AG04450 (cell line): ENCODE measurements at regions of chr9 and their contacts with region 1.

Region 1: GRCh38 chr9:116687074-116687753 is at the start of gene TRIM32:
- DNase-seq: peak; percentile 67
- H3K4me3 ChIP-seq: peak within 1 kb of the TSS; percentile 81
- H3K27ac ChIP-seq: peak within 1 kb of the TSS; percentile 31
- H3K27me3 ChIP-seq: no peaks in the 10 kb centered on the region
- CTCF ChIP-seq: no peak
- polyA plus RNA-seq, gene TRIM32: 23.4 and 24.5 TPM in 2 replicates

Region 2: DNA sequence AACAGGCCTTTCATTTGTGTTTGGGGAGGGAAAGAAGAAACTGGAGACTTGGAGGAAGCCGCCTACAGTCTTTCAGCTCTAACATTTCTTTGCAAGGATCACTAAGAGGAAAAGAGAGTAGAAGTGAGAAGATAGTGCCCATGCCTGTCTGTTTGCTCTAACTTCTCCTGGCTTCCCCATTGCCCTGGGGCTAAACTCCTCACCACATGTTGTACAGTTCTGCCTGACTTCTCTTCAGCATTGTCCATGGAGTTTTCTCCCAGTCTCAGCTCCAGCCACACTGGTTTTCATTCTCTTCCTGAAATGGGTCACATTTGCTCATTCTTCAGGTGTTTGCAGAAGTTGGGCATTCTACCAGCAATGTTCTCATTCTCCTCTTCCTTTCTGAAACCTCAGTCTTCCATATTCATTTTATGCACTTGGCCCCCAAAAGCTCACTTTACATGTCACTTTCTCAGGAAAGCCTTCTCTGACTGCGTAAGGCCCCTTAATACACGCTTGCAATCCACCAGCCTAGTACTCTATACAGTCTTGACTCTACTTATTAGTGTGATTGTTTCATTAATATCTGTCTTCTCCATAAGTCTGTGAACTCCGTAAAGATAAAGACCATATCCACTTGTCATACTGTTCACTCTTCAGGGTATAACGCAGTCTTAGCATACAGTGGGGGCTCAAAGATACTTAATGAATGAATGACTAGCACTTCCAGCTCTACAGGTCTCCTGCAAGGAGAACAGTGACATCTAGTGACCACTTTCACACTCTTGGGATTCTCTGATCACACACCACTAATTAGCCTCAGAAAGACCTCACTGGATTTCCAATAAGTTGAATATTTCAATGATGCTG is 40.3 kb before region 1 on chr9:
- CTCF ChIA-PET with region 1: no interaction called
- POLR2A ChIA-PET with region 1: no interaction called
- DNase-seq: no peak
- H3K4me3 ChIP-seq: no peak overlapping the region
- H3K27ac ChIP-seq: no peak overlapping the region
- H3K27me3 ChIP-seq: no peaks in the 10 kb centered on the region
- CTCF ChIP-seq: peak; percentile 70

Region 3: DNA sequence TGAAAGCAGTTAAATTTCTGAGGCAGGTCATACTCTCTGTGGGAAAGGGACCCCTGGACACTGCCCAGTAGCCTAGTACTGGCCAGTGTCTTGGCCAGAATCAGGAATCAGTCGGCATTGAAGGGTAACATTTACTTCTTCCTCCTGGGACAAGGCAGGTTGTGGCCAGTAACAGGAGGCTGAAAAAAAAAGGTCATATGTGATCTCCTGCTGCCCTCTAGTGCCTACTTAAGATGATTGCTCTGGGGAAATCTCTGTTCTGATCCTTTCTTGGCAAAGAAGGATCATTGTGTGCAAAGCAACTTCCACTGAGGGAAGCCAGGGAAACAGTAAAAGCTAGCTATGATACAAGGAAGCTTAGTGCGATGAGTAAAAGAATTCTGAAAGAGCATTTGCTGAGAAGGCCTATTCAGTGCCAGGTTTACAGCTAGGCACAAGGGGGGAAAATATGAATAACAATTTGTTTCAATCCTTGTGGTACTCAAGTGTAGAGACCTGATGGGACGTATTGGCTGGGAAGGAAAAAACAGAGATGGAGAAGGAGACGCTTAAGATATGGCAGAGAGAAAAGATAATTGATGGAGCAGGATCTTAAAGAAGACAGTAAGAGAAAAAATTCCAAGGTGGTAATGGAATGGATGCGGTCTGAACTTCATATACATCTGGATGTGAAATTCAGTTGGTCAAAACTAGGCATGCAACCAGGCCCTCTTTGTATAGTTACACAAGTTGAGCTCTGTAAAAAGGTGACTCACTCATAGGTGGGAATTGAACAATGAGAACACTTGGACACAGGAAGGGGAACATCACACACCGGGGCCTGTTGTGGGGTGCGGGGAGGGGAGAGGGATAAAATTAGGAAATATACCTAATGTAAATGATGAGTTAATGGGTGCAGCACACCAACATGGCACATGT is 25.9 kb before region 1 on chr9:
- CTCF ChIA-PET with region 1: no interaction called
- POLR2A ChIA-PET with region 1: no interaction called
- DNase-seq: peak; percentile 74
- H3K4me3 ChIP-seq: no peak overlapping the region
- H3K27ac ChIP-seq: no peak overlapping the region
- H3K27me3 ChIP-seq: no peaks in the 10 kb centered on the region
- CTCF ChIP-seq: peak; percentile 82

Region 4: DNA sequence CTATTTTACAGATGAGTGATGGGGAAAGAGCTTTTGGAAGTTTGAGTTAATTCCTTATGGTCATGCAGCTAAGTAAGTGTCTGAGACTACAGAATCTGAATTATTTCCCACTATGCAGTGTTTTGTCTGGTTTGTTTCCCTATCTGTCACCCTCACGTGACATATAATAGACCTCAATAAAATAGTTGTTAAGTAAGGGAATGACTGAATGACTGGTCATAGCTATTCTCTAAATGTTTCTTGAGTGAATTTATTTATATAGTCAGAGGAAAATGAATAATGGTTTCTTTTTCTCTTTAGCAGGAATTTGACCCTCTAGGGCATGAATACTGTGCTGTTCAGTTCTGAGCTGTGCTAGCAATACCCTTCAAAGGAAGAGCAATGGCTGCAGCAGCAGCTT is 10.1 kb after region 1 on chr9:
- CTCF ChIA-PET with region 1: interaction called, 3 read pairs
- POLR2A ChIA-PET with region 1: interaction called, 13 read pairs
- DNase-seq: no peak
- H3K4me3 ChIP-seq: no peak overlapping the region
- H3K27ac ChIP-seq: no peak overlapping the region
- H3K27me3 ChIP-seq: no peaks in the 10 kb centered on the region
- CTCF ChIP-seq: no peak

Region 5: GRCh38 chr9:116717150-116717549 is 29.9 kb after region 1 on chr9:
- CTCF ChIA-PET with region 1: no interaction called
- POLR2A ChIA-PET with region 1: no interaction called
- DNase-seq: no peak
- H3K4me3 ChIP-seq: no peak overlapping the region
- H3K27ac ChIP-seq: no peak overlapping the region
- H3K27me3 ChIP-seq: peaks cover 2% of the 10 kb centered on the region
- CTCF ChIP-seq: no peak

Region 6: DNA sequence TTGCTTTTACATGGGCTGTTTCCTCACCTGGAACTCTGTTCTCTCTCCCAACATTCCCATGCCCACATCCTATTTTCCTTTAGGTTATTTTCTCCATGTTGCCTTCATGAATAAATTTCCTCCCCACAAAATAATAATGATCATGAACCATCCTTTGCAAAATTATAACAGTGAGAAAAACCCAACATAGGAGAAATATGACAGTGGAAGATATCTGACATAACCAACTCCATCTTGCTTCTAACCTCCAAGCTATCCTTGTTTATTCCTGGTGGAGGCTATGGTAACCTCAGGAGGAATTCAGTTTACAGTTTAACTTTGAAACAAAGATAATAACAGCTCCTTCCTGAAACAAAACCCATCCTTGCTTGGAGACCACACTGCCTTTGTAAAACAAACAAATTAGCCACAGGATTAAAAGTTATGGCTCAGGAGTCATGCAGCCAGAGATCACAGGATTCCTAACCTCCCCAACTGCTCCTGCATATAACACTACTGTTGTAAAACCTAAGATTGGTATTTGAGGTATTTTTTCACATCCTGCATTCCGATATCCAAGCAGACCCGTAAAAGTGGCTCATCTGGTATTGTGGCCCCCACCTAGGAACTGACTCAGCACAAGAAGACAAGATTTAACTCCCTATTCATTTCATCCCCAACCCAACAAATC is 212.3 kb after region 1 on chr9:
- CTCF ChIA-PET with region 1: no interaction called
- POLR2A ChIA-PET with region 1: no interaction called
- DNase-seq: peak; percentile 21
- H3K4me3 ChIP-seq: no peak overlapping the region
- H3K27ac ChIP-seq: no peak overlapping the region
- H3K27me3 ChIP-seq: no peaks in the 10 kb centered on the region
- CTCF ChIP-seq: no peak